CD8-positive, alpha-beta T cell (primary cell): ENCODE measurements at regions of chr6 and their contacts with region 1.

Region 1: GRCh38 chr6:144013486-144013909 is 5.4 kb upstream of the PLAGL1 start:
- DNase-seq: peak; percentile 16 to 74 (median 63)
- ATAC-seq: no peak
- H3K4me3 ChIP-seq: no peak overlapping the region
- H3K4me3 Mint-ChIP-seq: no peak overlapping the region
- H3K27ac ChIP-seq: no peak overlapping the region
- H3K27ac Mint-ChIP-seq: no peak overlapping the region
- H3K4me1 ChIP-seq: no peaks in the 10 kb centered on the region
- H3K4me1 Mint-ChIP-seq: peaks cover 4% of the 10 kb centered on the region
- H3K27me3 ChIP-seq: no peaks in the 10 kb centered on the region
- H3K27me3 Mint-ChIP-seq: peaks cover 3% of the 10 kb centered on the region
- CTCF ChIP-seq: peak; percentile 90

Region 2: GRCh38 chr6:142692942-142693341 is 1320.6 kb before region 1 on chr6:
- CTCF ChIA-PET with region 1: interaction called, 4 read pairs
- POLR2A ChIA-PET with region 1: no interaction called
- intact Hi-C with region 1: loop called in 1 of 2 experiments (anchors 5 kb)
- DNase-seq: peak; percentile 47 to 82 (median 71)
- ATAC-seq: peak; percentile 88
- H3K4me3 ChIP-seq: no peak overlapping the region
- H3K4me3 Mint-ChIP-seq: no peak overlapping the region
- H3K27ac ChIP-seq: no peak overlapping the region
- H3K27ac Mint-ChIP-seq: no peak overlapping the region
- H3K4me1 ChIP-seq: peaks cover 4% of the 10 kb centered on the region
- H3K4me1 Mint-ChIP-seq: peaks cover 6% of the 10 kb centered on the region
- H3K27me3 ChIP-seq: no peaks in the 10 kb centered on the region
- H3K27me3 Mint-ChIP-seq: no peaks in the 10 kb centered on the region
- CTCF ChIP-seq: peak; percentile 90

Region 3: GRCh38 chr6:143575440-143575839 is 438.1 kb before region 1 on chr6:
- CTCF ChIA-PET with region 1: interaction called, 65 read pairs
- POLR2A ChIA-PET with region 1: interaction called, 4 read pairs
- intact Hi-C with region 1: loop called (anchors 1 kb)
- DNase-seq: peak; percentile 12 to 81 (median 46)
- ATAC-seq: peak; percentile 99
- H3K4me3 ChIP-seq: no peak overlapping the region
- H3K4me3 Mint-ChIP-seq: no peak overlapping the region
- H3K27ac ChIP-seq: no peak overlapping the region
- H3K27ac Mint-ChIP-seq: no peak overlapping the region
- H3K4me1 ChIP-seq: no peaks in the 10 kb centered on the region
- H3K4me1 Mint-ChIP-seq: no peaks in the 10 kb centered on the region
- H3K27me3 ChIP-seq: no peaks in the 10 kb centered on the region
- H3K27me3 Mint-ChIP-seq: no peaks in the 10 kb centered on the region
- CTCF ChIP-seq: peak; percentile 93

Region 4: GRCh38 chr6:143999406-143999805 is 14.1 kb before region 1 on chr6:
- CTCF ChIA-PET with region 1: interaction called, 12 read pairs
- POLR2A ChIA-PET with region 1: interaction called, 3 read pairs
- intact Hi-C with region 1: no loop called
- DNase-seq: no peak
- ATAC-seq: no peak
- H3K4me3 ChIP-seq: no peak overlapping the region
- H3K4me3 Mint-ChIP-seq: no peak overlapping the region
- H3K27ac ChIP-seq: no peak overlapping the region
- H3K27ac Mint-ChIP-seq: no peak overlapping the region
- H3K4me1 ChIP-seq: no peaks in the 10 kb centered on the region
- H3K4me1 Mint-ChIP-seq: no peaks in the 10 kb centered on the region
- H3K27me3 ChIP-seq: no peaks in the 10 kb centered on the region
- H3K27me3 Mint-ChIP-seq: peaks cover 2% of the 10 kb centered on the region
- CTCF ChIP-seq: no peak

Region 5: GRCh38 chr6:144036064-144036834 is 22.8 kb after region 1 on chr6:
- CTCF ChIA-PET with region 1: interaction called, 15 read pairs
- POLR2A ChIA-PET with region 1: no interaction called
- intact Hi-C with region 1: no loop called
- DNase-seq: peak in 2 of 9 experiments; percentile 13 to 18
- ATAC-seq: no peak
- H3K4me3 ChIP-seq: no peak overlapping the region
- H3K4me3 Mint-ChIP-seq: peak overlapping the region; percentile 48
- H3K27ac ChIP-seq: no peak overlapping the region
- H3K27ac Mint-ChIP-seq: no peak overlapping the region
- H3K4me1 ChIP-seq: peaks cover 5% of the 10 kb centered on the region
- H3K4me1 Mint-ChIP-seq: peaks cover 16% of the 10 kb centered on the region
- H3K27me3 ChIP-seq: no peaks in the 10 kb centered on the region
- H3K27me3 Mint-ChIP-seq: peaks cover 4% of the 10 kb centered on the region
- CTCF ChIP-seq: no peak

Region 6: DNA sequence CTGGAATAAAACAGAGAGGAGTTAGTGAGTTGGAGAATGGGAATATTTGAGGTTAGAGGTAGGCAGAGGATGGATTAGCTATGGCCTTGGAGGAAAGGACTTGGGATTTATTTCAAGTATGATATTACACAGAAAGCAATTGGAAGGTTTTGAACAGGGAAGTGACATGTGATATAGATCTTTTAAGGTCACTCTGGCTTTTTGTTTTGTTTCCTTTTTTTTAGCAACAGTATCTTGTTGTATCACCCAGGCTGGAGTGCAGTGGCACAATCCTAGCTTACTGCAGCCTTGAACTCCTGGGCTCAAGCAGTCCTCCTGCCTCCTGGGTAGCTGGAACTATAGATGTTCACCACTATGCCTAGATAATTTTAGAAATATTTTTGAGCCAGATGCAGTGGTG is 461.9 kb after region 1 on chr6:
- CTCF ChIA-PET with region 1: no interaction called
- POLR2A ChIA-PET with region 1: no interaction called
- intact Hi-C with region 1: no loop called
- DNase-seq: no peak
- ATAC-seq: no peak
- H3K4me3 ChIP-seq: no peak overlapping the region
- H3K4me3 Mint-ChIP-seq: no peak overlapping the region
- H3K27ac ChIP-seq: peak overlapping the region in 1 of 2 experiments; percentile 31
- H3K27ac Mint-ChIP-seq: peak overlapping the region; percentile 38
- H3K4me1 ChIP-seq: no peaks in the 10 kb centered on the region
- H3K4me1 Mint-ChIP-seq: no peaks in the 10 kb centered on the region
- H3K27me3 ChIP-seq: no peaks in the 10 kb centered on the region
- H3K27me3 Mint-ChIP-seq: no peaks in the 10 kb centered on the region
- CTCF ChIP-seq: no peak